Naive thymus-derived CD4-positive, alpha-beta T cell (primary cell): ENCODE measurements at regions of chr4 and their contacts with region 1.

Region 1: DNA sequence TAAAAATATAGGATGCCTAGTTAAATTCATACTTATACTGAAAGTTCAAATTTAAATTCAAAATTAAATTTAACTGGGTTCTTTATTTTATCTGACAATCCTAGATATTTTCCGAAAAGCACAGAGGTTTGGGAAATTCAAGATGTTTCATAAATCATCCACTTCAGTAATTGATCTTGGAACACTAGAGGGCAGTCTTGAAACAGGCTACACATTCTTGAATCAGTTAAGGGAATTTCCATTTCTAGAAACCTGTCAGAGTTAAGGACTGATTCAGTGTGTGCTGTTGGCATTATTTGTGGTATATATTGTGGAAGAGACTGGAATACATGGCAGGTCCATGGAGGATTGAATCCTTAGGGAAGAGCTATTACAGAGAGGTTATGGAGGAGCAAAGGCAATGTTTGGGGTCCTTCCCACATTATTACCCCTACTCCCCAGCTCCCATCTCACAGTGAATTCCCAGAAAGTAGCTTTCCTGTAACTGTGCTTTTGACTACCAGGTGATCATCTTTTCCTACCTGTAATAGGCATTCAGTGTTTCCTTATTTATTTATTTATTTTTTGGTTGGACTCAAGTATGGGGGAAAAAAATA is 92.9 kb downstream of the EGF start:
- DNase-seq: peak in 7 of 9 donors; percentile 26 to 62 (median 51)
- ATAC-seq: peak; percentile 86
- H3K4me3 ChIP-seq: no peak overlapping the region
- H3K4me3 Mint-ChIP-seq: no peak overlapping the region
- H3K27ac ChIP-seq: no peak overlapping the region
- H3K27ac Mint-ChIP-seq: no peak overlapping the region
- H3K4me1 ChIP-seq: no peaks in the 10 kb centered on the region
- H3K4me1 Mint-ChIP-seq: peaks cover 0 to 32% (median 0%) of the 10 kb centered on the region in 7 donors
- H3K27me3 ChIP-seq: no peaks in the 10 kb centered on the region
- H3K27me3 Mint-ChIP-seq: peaks cover 0 to 25% (median 6%) of the 10 kb centered on the region in 5 donors

Region 2: DNA sequence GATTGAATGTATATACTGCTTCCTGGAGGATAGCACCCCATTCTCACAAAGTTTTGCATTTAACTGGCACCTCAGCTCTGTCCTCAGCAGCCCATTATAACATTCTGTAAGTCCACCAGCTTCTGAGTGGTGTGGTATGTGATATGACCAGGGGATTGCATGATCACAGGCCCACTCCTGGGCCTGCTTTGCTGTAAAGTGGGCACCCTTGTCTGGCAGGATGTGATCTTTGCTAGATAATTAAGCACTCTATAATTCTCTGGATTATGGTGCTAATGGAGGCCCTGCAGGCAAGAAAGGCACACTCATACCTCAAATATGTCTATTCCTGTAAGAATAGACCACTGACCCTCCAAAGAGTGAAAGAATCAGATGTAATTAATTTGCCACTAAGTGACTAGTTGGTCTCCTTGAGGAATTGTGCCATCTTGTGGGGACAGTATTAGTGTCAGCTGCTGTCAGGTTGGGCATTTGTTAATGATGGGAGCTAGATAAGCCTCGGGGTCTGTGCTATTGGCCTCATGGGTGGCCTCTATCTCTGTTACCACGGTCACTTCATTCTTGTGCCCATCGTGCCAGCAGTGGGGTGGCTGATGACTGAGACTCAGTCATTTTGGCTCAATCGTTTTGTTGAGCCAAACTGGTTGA is 201.5 kb before region 1 on chr4:
- CTCF ChIA-PET with region 1: no interaction called
- POLR2A ChIA-PET with region 1: no interaction called
- intact Hi-C with region 1: no loop called
- DNase-seq: peak in 4 of 9 donors; percentile 8 to 25 (median 16)
- ATAC-seq: peak; percentile 44
- H3K4me3 ChIP-seq: no peak overlapping the region
- H3K4me3 Mint-ChIP-seq: no peak overlapping the region
- H3K27ac ChIP-seq: no peak overlapping the region
- H3K27ac Mint-ChIP-seq: no peak overlapping the region
- H3K4me1 ChIP-seq: no peaks in the 10 kb centered on the region
- H3K4me1 Mint-ChIP-seq: no peaks in the 10 kb centered on the region
- H3K27me3 ChIP-seq: no peaks in the 10 kb centered on the region
- H3K27me3 Mint-ChIP-seq: peaks cover 0 to 10% (median 7%) of the 10 kb centered on the region in 5 donors

Region 3: DNA sequence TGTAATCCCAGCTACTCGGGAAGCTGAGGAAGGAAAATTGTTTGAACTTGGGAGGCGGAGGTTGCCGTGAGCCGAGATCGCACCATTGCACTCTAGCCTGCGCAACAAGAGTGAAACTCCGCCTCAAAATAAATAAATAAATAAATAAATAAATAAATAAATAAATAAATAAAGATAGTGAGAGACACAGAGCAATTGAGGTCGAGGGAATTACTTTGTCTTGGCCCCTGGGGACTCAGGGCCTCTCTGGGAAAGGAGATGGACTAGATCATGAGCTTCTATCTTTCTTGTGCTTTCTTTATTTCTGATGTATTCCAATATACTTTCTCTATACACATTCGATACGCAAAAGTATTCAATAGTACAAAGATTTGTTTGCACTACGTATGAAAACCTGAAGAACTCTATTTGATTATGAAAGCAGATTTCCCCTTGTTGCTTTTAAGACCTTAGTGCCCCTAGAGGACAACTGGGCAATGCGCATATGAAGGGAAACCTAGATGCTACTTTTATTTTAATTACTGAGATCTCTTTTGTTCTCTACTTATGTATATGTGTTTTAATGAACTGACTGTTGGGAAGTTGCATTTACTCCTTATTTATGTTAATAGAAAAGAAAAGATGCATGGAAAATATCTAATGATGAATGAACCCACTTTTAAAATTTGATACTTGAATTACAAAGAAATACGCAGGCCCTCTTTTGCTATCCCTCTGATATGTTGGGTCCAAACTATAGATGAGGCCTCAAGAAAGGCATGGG is 205.6 kb after region 1 on chr4:
- CTCF ChIA-PET with region 1: no interaction called
- POLR2A ChIA-PET with region 1: no interaction called
- intact Hi-C with region 1: loop called (anchors 1 kb)
- DNase-seq: peak in 7 of 9 donors; percentile 15 to 59 (median 45)
- ATAC-seq: peak; percentile 78
- H3K4me3 ChIP-seq: no peak overlapping the region
- H3K4me3 Mint-ChIP-seq: peak overlapping the region in 2 of 10 donors; percentile 25 to 29
- H3K27ac ChIP-seq: no peak overlapping the region
- H3K27ac Mint-ChIP-seq: peak overlapping the region in 1 of 9 donors; percentile 25
- H3K4me1 ChIP-seq: no peaks in the 10 kb centered on the region
- H3K4me1 Mint-ChIP-seq: peaks cover 0 to 5% (median 0%) of the 10 kb centered on the region in 7 donors
- H3K27me3 ChIP-seq: no peaks in the 10 kb centered on the region
- H3K27me3 Mint-ChIP-seq: peaks cover 0 to 7% (median 0%) of the 10 kb centered on the region in 5 donors

Region 4: DNA sequence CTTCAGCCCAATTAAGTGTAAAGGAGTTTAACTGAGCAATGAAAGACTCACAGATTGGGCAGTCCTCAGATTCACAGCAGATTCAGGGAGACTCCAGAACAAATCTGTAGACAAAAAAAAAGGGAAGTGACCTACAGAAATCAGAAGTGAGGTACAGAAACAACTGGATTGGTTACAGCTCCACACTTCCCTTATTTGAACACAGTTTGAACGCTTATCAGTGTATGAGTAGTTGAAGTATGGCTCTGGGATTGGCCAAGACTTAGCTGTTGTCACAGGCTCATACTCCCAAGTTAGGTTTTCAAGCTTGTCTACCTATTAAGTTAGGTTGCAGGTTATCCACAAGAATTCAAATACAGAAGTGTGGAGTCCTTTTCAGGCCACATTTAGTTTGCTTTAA is 305.2 kb after region 1 on chr4:
- CTCF ChIA-PET with region 1: no interaction called
- POLR2A ChIA-PET with region 1: no interaction called
- intact Hi-C with region 1: loop called in 1 of 2 experiments (anchors 2 kb)
- DNase-seq: no peak
- ATAC-seq: peak; percentile 72
- H3K4me3 ChIP-seq: no peak overlapping the region
- H3K4me3 Mint-ChIP-seq: no peak overlapping the region
- H3K27ac ChIP-seq: no peak overlapping the region
- H3K27ac Mint-ChIP-seq: peak overlapping the region in 1 of 9 donors; percentile 33
- H3K4me1 ChIP-seq: no peaks in the 10 kb centered on the region
- H3K4me1 Mint-ChIP-seq: no peaks in the 10 kb centered on the region
- H3K27me3 ChIP-seq: no peaks in the 10 kb centered on the region
- H3K27me3 Mint-ChIP-seq: peaks cover 10 to 25% (median 18%) of the 10 kb centered on the region in 5 donors

Region 5: GRCh38 chr4:110510955-110511544 is 505.5 kb after region 1 on chr4:
- CTCF ChIA-PET with region 1: interaction called, 111 read pairs
- POLR2A ChIA-PET with region 1: no interaction called
- intact Hi-C with region 1: loop called (anchors 1 kb)
- DNase-seq: peak in 7 of 9 donors; percentile 12 to 61 (median 48)
- ATAC-seq: peak; percentile 85
- H3K4me3 ChIP-seq: no peak overlapping the region
- H3K4me3 Mint-ChIP-seq: no peak overlapping the region
- H3K27ac ChIP-seq: no peak overlapping the region
- H3K27ac Mint-ChIP-seq: no peak overlapping the region
- H3K4me1 ChIP-seq: peaks cover 0 to 5% of the 10 kb centered on the region in 2 donors
- H3K4me1 Mint-ChIP-seq: peaks cover 4 to 12% (median 10%) of the 10 kb centered on the region in 7 donors
- H3K27me3 ChIP-seq: no peaks in the 10 kb centered on the region
- H3K27me3 Mint-ChIP-seq: peaks cover 0 to 6% (median 0%) of the 10 kb centered on the region in 5 donors